RWPE1 (cell line): ENCODE measurements at regions of chr6 and their contacts with region 1.

Region 1: GRCh38 chr6:85354761-85355618 is 94.9 kb upstream of the NT5E start:
- DNase-seq: peak; percentile 68
- H3K27ac ChIP-seq: no peak overlapping the region
- CTCF ChIP-seq: peak; percentile 93

Region 2: GRCh38 chr6:85449818-85450759 is 95.1 kb after region 1 on chr6 and contains the start of gene NT5E:
- CTCF ChIA-PET with region 1: interaction called, 10 read pairs
- POLR2A ChIA-PET with region 1: no interaction called
- DNase-seq: peak; percentile 69
- H3K27ac ChIP-seq: peak within 1 kb of the TSS; percentile 95
- CTCF ChIP-seq: no peak

Region 3: GRCh38 chr6:85482905-85483700 is 128.1 kb after region 1 on chr6:
- CTCF ChIA-PET with region 1: interaction called, 32 read pairs
- POLR2A ChIA-PET with region 1: no interaction called
- DNase-seq: peak; percentile 64
- H3K27ac ChIP-seq: no peak overlapping the region; the same call in 1 of the 2 replicates
- CTCF ChIP-seq: peak; percentile 99

Region 4: DNA sequence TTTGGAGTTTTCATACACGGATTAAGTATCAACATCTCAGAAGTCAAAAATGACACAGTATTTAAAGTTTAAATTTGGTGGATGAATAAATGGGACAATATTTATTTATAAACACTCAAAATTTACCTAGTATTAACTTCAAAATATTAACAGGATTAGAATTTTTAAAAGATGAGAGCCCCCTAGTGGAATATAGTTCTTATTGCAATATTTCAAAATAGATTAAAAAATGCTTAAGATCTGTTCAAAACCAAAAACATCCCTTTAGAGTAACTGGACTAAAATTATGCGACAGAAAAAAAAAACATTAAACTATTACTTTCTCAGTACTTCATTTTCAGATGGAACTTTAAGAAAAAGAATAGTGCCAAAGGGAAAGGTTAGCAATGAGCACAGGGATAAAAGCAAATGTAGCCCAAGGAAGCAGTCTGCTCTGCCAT is 182.1 kb after region 1 on chr6:
- CTCF ChIA-PET with region 1: interaction called, 10 read pairs
- POLR2A ChIA-PET with region 1: no interaction called
- DNase-seq: peak; percentile 5
- H3K27ac ChIP-seq: no peak overlapping the region
- CTCF ChIP-seq: peak; percentile 74